Prostate gland (tissue), 2 donors: ENCODE measurements at regions of chr22 and their contacts with region 1.

Region 1: GRCh38 chr22:20418211-20418788 is 19.3 kb downstream of the SCARF2 start:
- DNase-seq: peak; percentile 70
- H3K4me3 ChIP-seq: peak overlapping the region; percentile 10 to 24
- H3K27ac ChIP-seq: peak overlapping the region in 1 of 2 donors; percentile 45
- H3K4me1 ChIP-seq: no peaks in the 10 kb centered on the region
- H3K27me3 ChIP-seq: no peaks in the 10 kb centered on the region
- CTCF ChIP-seq: peak; percentile 73 to 79 (median 74)
- POLR2A ChIP-seq: no peak

Region 2: GRCh38 chr22:20456064-20456721 is 37.9 kb after region 1 on chr22:
- intact Hi-C with region 1: loop called (anchors 2 kb)
- DNase-seq: peak; percentile 62
- H3K4me3 ChIP-seq: no peak overlapping the region
- H3K27ac ChIP-seq: no peak overlapping the region
- H3K4me1 ChIP-seq: no peaks in the 10 kb centered on the region
- H3K27me3 ChIP-seq: no peaks in the 10 kb centered on the region
- CTCF ChIP-seq: peak; percentile 66 to 88 (median 82)
- POLR2A ChIP-seq: no peak

Region 3: GRCh38 chr22:20472629-20473442 is 54.5 kb after region 1 on chr22:
- intact Hi-C with region 1: no loop called
- DNase-seq: no peak
- H3K4me3 ChIP-seq: no peak overlapping the region
- H3K27ac ChIP-seq: no peak overlapping the region
- H3K4me1 ChIP-seq: no peaks in the 10 kb centered on the region
- H3K27me3 ChIP-seq: no peaks in the 10 kb centered on the region
- CTCF ChIP-seq: no peak
- POLR2A ChIP-seq: no peak